HEK293 (cell line): ENCODE measurements at regions of chr11 and their contacts with region 1.

Region 1: DNA sequence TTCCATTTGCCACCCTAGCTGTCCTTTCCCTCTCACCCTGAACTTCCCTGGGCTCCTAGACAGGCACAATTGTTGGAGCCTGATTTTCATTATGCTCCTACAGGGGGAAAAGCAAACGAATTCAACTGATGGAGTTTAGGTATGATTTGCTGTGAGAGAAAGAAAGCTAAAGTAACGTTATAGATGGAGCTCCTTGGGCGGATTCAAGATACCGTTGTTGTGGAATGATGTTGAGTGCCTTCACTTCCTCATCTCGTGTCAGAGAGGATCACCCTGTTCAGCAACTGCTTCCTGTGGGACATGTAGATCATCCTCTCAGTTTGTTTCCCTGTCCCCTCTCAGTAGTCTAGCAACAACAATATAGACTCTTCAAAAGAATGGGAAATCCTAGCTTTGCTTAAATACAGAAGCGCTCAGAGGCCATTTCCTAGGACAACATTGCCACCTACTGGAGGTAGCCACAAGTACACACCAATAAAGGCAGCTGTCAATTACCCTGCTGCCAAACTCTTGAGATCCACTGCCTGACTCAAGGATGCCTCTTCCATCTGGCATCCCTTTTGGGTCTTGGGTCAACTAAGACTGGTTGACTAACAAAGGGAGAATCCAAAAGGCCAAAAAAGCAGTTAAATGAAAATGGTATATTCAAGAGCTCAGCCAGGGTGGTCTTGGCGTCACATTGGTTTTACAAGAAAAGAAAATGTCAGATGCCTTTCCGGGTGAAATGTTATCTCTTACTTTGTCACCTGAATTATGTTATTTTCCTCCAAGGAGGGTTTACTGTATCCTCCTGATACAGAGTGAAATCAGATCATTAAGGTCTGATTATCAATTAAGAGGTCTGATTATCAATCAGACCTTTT is 13.5 kb upstream of the DTX4 start:
- H3K4me3 ChIP-seq: no peak overlapping the region
- H3K27ac ChIP-seq: no peak overlapping the region
- H3K4me1 ChIP-seq: no peaks in the 10 kb centered on the region
- CTCF ChIP-seq: peak; percentile 42; the same call in 1 of the 2 replicates

Region 2: GRCh38 chr11:58654079-58654907 is 504.1 kb before region 1 on chr11:
- CTCF ChIA-PET with region 1: interaction called, 11 read pairs
- POLR2A ChIA-PET with region 1: no interaction called
- H3K4me3 ChIP-seq: no peak overlapping the region
- H3K27ac ChIP-seq: no peak overlapping the region
- H3K4me1 ChIP-seq: no peaks in the 10 kb centered on the region
- CTCF ChIP-seq: peak; percentile 50; the same call in 1 of the 2 replicates

Region 3: DNA sequence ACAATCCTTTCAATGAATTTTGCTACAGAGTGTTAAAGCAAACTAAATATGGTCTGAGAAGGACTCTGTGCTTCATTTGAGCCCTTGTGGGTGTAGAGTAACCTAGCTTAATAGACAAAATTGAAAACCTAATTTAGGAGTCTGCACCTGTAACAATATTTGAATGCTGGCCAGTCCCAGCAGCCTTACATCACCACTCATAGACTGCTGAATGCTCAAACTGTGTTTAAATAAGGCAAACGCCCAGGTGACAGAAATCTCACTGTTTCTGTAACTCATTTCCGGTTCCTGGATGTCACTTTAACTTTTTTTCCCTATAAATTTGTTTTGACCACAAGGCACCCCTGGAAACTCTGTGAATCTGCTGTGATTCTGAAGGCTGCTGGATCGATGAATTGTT is 117.8 kb before region 1 on chr11:
- CTCF ChIA-PET with region 1: no interaction called
- POLR2A ChIA-PET with region 1: no interaction called
- H3K4me3 ChIP-seq: no peak overlapping the region
- H3K27ac ChIP-seq: no peak overlapping the region
- H3K4me1 ChIP-seq: no peaks in the 10 kb centered on the region
- CTCF ChIP-seq: no peak

Region 4: GRCh38 chr11:59076876-59077571 is 81.4 kb before region 1 on chr11:
- CTCF ChIA-PET with region 1: interaction called, 10 read pairs
- POLR2A ChIA-PET with region 1: no interaction called
- H3K4me3 ChIP-seq: no peak overlapping the region
- H3K27ac ChIP-seq: no peak overlapping the region
- H3K4me1 ChIP-seq: no peaks in the 10 kb centered on the region
- CTCF ChIP-seq: no peak

Region 5: GRCh38 chr11:59135648-59136461 is 22.6 kb before region 1 on chr11:
- CTCF ChIA-PET with region 1: interaction called, 20 read pairs
- POLR2A ChIA-PET with region 1: no interaction called
- H3K4me3 ChIP-seq: no peak overlapping the region; the same call in 1 of the 2 replicates
- H3K27ac ChIP-seq: no peak overlapping the region
- H3K4me1 ChIP-seq: no peaks in the 10 kb centered on the region
- CTCF ChIP-seq: 0 out of 2 replicates have a peak, but pooled peaks have one; percentile 8

Region 6: DNA sequence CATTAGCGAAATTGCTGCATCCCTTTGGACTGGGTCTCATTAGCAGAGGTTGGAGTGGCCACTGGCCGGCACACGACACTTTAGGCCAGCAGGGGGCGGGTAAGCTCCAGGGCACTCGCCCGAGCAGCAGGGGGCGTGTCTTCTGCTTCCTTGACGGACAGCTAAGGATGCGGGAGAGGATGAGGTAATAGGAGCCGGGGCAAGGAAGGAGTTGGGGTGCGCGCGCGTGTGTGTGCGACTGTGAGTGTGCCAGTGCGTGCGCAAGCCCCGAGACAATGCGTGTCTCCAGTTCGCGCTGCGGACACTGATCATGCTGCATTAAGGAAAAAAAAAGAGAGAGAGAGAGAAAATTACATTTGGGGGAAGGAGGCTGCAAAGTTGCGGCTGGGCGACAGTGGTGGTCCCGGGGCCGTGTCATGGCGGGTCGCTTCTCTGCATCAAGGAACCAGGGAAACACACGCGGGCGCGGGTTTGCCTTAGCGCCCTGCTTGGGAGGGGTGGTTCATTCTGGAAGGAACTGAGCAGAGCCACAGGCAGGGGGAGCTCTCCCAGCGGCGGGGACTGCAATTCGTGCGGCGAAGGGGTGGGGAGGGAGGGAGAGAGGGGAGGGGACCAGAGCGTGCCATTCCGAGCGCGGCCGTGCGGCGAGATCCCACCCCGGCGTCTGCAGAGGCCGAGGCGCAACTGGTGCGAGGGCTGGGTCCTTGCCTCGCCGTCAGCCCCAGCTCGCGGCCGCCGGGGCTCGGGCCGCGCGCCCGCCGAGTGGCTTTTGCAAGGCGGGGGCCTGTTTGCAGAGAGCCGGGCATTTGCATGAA is 13.3 kb after region 1 on chr11 and contains the start of gene DTX4:
- CTCF ChIA-PET with region 1: interaction called, 24 read pairs
- POLR2A ChIA-PET with region 1: no interaction called
- H3K4me3 ChIP-seq: peak within 1 kb of the TSS; percentile 41
- H3K27ac ChIP-seq: no peak within 1 kb of the TSS; the same call in 1 of the 2 replicates
- H3K4me1 ChIP-seq: no peaks in the 10 kb centered on the region; the same call in 1 of the 2 replicates
- CTCF ChIP-seq: peak; percentile 90

Region 7: DNA sequence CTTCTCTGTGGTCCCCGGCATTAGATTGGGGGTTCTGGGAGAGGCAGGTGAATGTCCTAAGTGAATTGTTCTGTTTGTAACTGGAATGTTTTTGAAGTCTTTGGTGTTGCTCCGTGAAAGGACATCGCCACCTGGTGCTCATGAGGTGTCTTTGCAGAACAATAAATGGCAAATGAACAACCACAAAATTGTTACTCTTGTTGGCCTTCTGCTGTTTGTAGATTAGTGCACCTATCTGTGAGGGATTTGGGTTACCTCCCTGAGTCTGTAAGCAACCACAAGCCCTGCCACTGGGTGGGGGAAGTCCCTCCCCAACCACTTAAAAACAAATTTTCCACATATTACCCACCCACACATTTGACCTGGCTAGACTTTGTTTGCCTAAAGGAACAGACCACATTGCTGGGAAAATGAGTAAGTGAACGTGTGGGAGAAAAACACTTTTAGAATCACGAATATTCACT is 49.6 kb after region 1 on chr11:
- CTCF ChIA-PET with region 1: no interaction called
- POLR2A ChIA-PET with region 1: no interaction called
- H3K4me3 ChIP-seq: no peak overlapping the region
- H3K27ac ChIP-seq: no peak overlapping the region
- H3K4me1 ChIP-seq: no peaks in the 10 kb centered on the region
- CTCF ChIP-seq: peak; percentile 43; the same call in 1 of the 2 replicates